PC-3 (cell line): ENCODE measurements at regions of chr15 and their contacts with region 1.

Region 1: DNA sequence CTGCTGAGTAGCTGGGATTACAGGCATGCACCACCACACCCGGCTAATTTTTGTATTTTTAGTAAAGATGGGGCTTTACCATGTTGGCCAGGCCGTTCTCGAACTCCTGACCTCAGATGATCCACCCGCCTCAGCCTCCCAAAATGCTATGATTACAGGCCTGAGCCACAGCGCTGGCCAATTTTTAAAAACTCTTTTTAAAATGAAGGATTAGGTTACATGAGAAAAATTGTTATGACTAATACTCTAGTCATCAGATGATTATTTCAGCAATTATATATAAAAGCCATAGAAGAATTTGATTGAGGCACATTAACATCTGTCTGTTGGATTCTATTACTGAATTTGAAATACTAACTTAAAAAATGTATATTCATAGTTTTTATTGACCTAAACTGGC is 134.1 kb upstream of the MNS1 start:
- DNase-seq: peak; percentile 73
- ATAC-seq: peak; percentile 78
- H3K4me3 ChIP-seq: no peak overlapping the region
- H3K27ac ChIP-seq: no peak overlapping the region
- H3K4me1 ChIP-seq: no peaks in the 10 kb centered on the region; the same call in 1 of the 2 replicates
- H3K27me3 ChIP-seq: no peaks in the 10 kb centered on the region
- CTCF ChIP-seq: no peak

Region 2: DNA sequence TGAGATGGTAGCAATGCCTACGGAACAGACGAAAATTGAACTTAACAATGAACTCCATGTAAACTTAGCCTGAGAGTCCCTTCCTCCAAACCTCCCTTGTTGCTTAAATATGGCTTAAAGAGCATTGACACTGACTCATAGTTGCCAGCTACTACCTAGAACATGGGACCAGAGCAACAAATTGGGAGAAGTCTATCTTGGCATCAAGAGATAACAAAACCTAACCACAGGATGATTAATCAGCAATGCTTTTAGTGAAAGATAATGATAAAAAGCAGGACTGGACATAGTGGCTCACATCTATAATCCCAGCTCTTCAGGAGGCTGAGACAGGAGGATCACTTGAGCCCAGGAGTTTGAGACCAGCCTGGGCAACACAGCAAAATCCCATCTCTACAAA is 16.2 kb before region 1 on chr15:
- CTCF ChIA-PET with region 1: no interaction called
- POLR2A ChIA-PET with region 1: no interaction called
- intact Hi-C with region 1: no loop called
- DNase-seq: no peak
- ATAC-seq: no peak
- H3K4me3 ChIP-seq: no peak overlapping the region
- H3K27ac ChIP-seq: no peak overlapping the region
- H3K4me1 ChIP-seq: peaks cover 5% of the 10 kb centered on the region; the same call in 1 of the 2 replicates
- H3K27me3 ChIP-seq: no peaks in the 10 kb centered on the region
- CTCF ChIP-seq: no peak

Region 3: DNA sequence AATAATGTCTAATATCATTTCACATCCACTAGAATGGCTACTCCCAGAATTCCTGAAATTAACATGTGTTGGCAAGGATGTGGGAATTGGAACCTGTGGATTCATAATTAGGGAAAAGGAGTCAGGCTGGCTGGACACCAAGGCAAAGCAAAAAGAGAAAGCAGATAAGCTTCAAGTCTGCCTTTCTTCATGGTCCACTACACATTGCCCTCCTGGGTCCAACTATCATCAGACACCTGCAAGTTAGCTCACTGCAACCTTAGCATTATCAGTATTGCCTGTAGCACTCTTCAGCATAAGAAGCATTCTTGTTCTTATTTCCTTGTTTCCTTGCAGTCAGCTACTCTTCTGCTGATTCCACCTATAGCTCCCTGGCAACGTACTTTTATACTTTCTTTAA is 10.0 kb after region 1 on chr15:
- CTCF ChIA-PET with region 1: no interaction called
- POLR2A ChIA-PET with region 1: no interaction called
- intact Hi-C with region 1: loop called (anchors 1 kb)
- DNase-seq: no peak
- ATAC-seq: no peak
- H3K4me3 ChIP-seq: no peak overlapping the region
- H3K27ac ChIP-seq: no peak overlapping the region
- H3K4me1 ChIP-seq: no peaks in the 10 kb centered on the region
- H3K27me3 ChIP-seq: no peaks in the 10 kb centered on the region
- CTCF ChIP-seq: no peak